ENCODE measurements at regions of chr5 and their contacts with region 1.

Region 1: DNA sequence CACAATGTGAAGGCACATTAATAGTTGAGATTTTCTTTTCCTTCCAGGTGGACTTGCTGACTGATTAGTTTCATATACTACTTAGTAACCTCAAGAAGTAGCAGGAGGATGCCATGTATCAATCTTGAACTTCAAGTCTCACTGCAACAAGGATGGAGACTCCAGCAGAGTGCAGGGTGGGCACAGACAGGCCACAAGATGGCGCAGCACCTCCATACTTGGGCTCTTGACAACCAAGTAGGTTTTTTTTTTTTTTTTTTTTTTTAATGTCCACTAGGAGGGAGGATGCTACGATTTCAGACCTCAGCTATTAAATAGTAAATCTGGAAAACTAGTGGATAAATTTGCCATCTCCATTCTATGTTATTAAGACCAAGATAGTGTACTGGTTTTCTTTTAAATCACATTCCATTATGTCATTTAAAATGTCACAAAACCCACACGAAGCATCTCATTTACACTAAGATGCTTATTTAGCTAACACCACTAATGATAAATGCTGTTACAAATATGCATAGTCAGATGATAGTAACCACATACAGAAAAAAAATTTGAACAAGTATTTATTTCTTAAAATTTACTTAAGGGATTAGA is 58.6 kb downstream of the IL6ST start:
- DNase-seq: peak; percentile 89
- ATAC-seq: peak; percentile 84

Region 2: DNA sequence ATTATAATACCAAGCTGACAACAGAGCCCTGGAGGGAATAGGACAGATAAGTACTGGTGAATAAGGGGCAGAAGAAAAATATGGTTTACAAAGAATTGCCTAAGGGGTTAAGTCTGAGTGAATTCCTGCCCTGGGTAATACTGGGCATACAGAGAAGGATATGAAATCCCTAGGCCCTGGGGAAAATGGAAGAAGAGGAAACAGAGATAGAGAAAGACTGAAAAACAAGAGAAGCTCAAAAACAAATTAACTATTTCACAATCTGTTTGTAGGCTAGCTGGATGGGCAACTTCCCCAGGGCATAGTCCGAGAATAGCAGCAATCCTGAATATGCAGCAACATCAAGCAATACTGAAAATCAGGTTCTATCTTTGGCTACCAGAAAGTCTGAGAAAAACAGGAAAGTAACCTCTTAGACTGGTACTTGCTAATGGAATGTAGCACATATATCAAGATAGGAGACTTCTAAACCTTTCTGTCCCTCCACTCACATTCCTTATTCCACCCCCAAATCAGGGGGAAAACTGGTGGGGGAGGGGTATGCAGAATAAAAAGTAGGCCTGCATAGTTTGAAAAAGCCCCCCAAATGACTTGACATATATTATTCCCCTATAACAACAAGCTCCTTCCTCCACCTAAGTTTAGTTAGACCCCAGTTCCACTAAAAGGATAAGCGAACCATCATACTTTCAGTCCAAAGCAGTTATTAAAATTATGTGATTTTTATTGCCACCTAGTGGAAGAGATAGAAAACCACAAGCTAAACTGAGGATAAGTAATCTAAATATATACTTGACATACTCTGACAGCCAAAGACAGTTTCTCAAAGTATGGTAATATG is 244.7 kb before region 1 on chr5:
- intact Hi-C with region 1: no loop called
- DNase-seq: no peak
- ATAC-seq: peak; percentile 83

Region 3: GRCh38 chr5:56012281-56012963 is 76.2 kb after region 1 on chr5:
- intact Hi-C with region 1: no loop called
- DNase-seq: peak; percentile 49
- ATAC-seq: peak; percentile 62

Region 4: GRCh38 chr5:56200856-56201666 is 264.9 kb after region 1 on chr5:
- intact Hi-C with region 1: loop called (anchors 5 kb)
- DNase-seq: peak; percentile 57
- ATAC-seq: peak; percentile 97

Region 5: GRCh38 chr5:56290378-56291078 is 354.3 kb after region 1 on chr5:
- intact Hi-C with region 1: no loop called
- DNase-seq: no peak
- ATAC-seq: no peak